GM23248 (cell line): ENCODE measurements at regions of chr7 and their contacts with region 1.

Region 1: DNA sequence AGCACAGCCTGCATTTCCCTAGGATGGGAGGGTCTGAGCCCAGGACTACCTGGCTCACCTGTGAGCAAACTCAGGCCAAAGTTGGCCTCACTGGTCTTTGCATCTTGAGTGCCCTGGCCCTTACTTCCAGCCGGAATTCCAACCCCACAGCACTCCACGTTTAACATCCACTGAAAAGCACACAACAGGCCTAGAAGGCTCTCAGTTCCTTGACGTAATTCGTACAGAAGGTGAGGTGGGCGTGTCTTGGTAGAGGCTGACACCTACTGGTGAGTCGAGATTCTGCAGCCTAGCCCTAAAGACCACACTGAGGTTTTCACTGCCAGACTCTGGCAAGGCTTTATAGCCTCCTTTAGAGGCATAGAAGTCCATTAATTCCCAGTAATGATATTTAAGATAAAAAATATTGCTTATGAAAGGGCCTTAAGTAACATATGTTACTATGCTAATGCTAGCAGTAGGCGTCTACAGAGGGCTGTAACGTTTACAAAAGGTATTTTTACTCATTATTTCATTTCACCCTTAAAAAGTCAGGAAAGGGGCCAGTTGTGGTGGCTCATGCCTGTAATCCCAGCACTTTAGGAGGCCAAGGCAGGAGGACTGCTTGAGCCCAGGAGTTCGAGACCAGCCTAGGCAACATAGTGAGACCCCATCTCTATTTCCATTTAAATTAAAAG is 95.8 kb downstream of the HIP1 start:
- DNase-seq: peak; percentile 73
- H3K4me3 ChIP-seq: no peak overlapping the region
- H3K27ac ChIP-seq: no peak overlapping the region
- H3K4me1 ChIP-seq: peaks cover 6% of the 10 kb centered on the region; the same call in 1 of the 2 replicates
- H3K27me3 ChIP-seq: no peaks in the 10 kb centered on the region

Region 2: DNA sequence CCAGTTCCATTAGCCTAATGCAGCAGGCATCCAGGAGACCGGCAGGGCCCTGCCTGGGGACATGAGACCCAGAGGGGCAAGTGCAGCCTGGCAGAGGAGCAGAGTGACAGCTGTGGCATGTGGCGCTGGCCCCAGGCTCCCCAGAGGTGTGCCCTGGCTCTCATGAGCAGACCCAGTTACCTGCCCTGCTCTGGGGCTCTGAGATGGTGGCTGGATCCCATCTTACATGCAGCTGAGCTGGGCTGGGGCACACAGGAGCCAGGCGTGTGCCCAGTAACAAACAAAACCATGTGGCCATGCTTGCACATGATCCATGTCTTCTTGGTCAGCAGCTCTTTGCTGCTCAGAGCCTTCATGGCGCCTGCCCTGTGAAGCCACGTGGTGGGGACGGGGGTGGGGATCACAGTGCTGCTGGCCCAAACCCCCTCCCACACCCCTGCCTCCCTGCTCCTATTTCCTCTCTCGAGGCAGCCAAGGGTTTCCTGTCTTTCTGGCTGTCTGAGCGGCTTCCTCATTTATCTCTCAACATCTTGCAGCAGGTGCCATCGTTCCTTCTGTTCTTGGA is 1025.7 kb before region 1 on chr7:
- in situ Hi-C with region 1: no loop called
- DNase-seq: no peak
- H3K4me3 ChIP-seq: no peak overlapping the region
- H3K27ac ChIP-seq: no peak overlapping the region
- H3K4me1 ChIP-seq: no peaks in the 10 kb centered on the region
- H3K27me3 ChIP-seq: no peaks in the 10 kb centered on the region

Region 3: DNA sequence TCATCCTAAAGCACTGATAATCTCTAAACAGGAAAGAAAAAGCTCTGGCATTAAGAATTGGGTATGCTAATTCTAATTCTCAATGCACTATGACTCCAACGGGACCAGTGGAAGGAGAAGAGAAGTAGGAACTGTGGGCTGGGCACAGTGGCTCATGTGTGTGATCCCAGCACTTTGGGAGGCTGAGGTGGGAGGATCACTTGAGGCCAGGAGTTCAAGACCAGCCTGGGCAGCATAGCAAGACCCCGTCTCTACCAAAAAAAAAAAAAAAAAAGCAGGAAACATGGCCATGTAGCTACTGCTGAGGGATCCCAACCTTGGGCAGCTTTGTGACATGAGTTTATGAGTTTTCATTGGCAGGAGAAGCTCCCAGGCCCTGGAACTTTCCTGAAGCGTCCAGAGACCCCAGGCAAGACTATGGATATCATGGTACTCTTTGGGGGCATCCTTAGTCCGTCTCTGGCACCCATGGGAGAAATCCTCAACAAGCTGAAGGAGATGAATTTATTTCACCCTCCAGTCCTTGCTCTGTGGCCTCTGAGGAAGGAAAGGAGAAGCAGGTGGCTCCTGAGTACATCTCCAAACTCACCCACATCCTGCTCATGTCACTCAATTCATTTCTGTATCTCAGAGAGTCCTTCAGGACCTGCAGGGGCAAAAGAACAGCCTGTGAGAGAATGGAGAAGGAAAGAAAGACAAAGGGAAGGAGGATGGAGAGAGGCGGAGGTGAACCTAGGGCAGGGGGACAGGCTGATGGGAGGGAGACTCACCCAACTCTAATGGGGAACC is 51.3 kb before region 1 on chr7:
- in situ Hi-C with region 1: loop called (anchors 5 kb)
- DNase-seq: no peak
- H3K4me3 ChIP-seq: no peak overlapping the region
- H3K27ac ChIP-seq: no peak overlapping the region
- H3K4me1 ChIP-seq: peaks cover 3% of the 10 kb centered on the region
- H3K27me3 ChIP-seq: no peaks in the 10 kb centered on the region

Region 4: GRCh38 chr7:75756991-75757676 is 114.2 kb after region 1 on chr7:
- in situ Hi-C with region 1: loop called (anchors 10 kb)
- DNase-seq: peak; percentile 67
- H3K4me3 ChIP-seq: no peak overlapping the region
- H3K27ac ChIP-seq: no peak overlapping the region
- H3K4me1 ChIP-seq: no peaks in the 10 kb centered on the region
- H3K27me3 ChIP-seq: no peaks in the 10 kb centered on the region